ENCODE measurements at regions of chr16 and their contacts with region 1.

Region 1: DNA sequence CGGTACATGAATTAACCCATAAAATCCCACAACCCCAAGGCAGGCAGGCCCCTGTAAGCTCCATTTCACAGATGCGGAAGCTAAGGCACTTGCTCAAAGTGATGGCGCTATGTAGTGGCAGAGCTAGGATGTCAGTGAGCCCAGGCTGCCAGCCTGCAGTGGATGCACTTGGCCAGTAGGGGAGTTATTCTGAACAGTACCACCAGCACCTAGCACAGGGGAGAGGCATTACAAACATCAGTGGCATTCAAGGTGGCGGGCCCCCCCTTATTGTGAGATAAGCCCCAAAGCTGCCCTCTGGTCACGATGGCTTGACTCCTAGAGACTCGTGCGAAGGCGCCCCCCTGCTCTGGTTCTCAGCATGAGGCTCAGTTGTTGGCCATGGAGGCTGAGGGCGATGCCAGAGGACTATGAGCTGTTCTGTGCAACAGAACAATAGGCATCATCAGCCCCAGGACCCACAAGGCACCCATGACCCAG is 33.8 kb downstream of the GTF3C1 start:
- DNase-seq: peak; percentile 39 to 79
- H3K4me3 ChIP-seq: no peak overlapping the region
- H3K27ac ChIP-seq: no peak overlapping the region
- H3K4me1 ChIP-seq: no peaks in the 10 kb centered on the region
- H3K27me3 ChIP-seq: no peaks in the 10 kb centered on the region
- CTCF ChIP-seq: peak; percentile 67 to 95 (median 95)
- EP300 ChIP-seq: no peak
- POLR2A ChIP-seq: no peak; a peak in 1 of 3 replicates
- RAD21 ChIP-seq: peak; percentile 18 to 29; a peak in 2 of 4 replicates

Region 2: DNA sequence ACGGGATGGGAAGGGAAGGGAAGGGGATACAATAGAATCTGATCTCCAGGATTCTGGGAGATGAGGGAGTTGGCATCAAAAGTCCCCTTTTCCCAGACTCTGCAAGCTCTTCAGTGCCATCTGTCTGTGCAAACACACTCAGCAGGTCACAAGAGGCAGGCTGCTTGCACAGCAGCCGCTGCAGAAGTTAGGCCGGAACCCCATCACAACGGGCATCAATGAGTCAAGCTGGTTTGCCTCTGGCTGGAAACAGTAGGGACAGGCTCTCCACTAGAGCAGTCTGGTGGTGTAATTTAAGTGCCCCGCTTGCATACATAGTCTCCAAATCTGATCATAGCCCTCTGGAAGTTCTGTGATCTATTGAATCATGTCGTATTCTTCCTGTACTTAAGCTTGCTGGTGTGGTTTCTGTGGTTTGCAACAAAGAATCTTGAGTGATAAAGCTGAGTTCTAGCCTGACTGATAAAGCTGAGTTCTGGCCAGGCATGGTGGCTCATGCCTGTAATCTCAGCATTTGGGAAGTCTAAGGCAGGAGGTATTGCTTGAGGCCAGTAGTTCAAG is 346.3 kb before region 1 on chr16:
- CTCF ChIA-PET with region 1: no interaction called
- POLR2A ChIA-PET with region 1: no interaction called
- DNase-seq: no peak
- H3K4me3 ChIP-seq: no peak overlapping the region
- H3K27ac ChIP-seq: no peak overlapping the region
- H3K4me1 ChIP-seq: no peaks in the 10 kb centered on the region
- H3K27me3 ChIP-seq: no peaks in the 10 kb centered on the region; a peak in 1 of 7 replicates
- CTCF ChIP-seq: peak; percentile 21 to 34 (median 28); a peak in 3 of 4 replicates
- EP300 ChIP-seq: no peak
- POLR2A ChIP-seq: no peak
- RAD21 ChIP-seq: peak; percentile 21 to 36; a peak in 3 of 4 replicates

Region 3: DNA sequence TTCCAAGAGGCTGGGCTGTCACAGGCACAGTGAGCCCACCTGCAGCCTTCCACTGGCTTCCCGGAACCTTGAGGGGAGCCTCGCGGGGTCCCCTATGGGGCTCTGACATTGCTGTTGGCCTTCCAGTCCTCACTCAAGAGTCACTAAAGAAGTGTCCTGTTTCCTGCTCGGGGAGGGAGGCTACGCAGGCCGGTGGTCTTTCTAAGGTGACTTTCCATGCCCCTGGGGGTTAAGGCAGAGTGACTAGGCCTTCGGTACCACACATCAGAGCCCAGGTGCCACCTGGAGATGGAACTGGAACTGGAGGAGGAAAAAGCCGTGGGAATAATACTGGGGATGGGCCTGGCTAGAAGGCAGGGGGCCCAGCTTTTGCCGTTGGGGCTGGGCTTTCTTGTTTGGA is 41.9 kb before region 1 on chr16:
- CTCF ChIA-PET with region 1: no interaction called
- POLR2A ChIA-PET with region 1: no interaction called
- DNase-seq: no peak
- H3K4me3 ChIP-seq: no peak overlapping the region
- H3K27ac ChIP-seq: no peak overlapping the region
- H3K4me1 ChIP-seq: no peaks in the 10 kb centered on the region
- H3K27me3 ChIP-seq: no peaks in the 10 kb centered on the region
- CTCF ChIP-seq: no peak
- EP300 ChIP-seq: no peak
- POLR2A ChIP-seq: no peak
- RAD21 ChIP-seq: no peak

Region 4: GRCh38 chr16:27499659-27500055 is 16.3 kb before region 1 on chr16:
- CTCF ChIA-PET with region 1: interaction called, 26 read pairs
- POLR2A ChIA-PET with region 1: no interaction called
- DNase-seq: no peak
- H3K4me3 ChIP-seq: no peak overlapping the region
- H3K27ac ChIP-seq: no peak overlapping the region
- H3K4me1 ChIP-seq: no peaks in the 10 kb centered on the region
- H3K27me3 ChIP-seq: no peaks in the 10 kb centered on the region
- CTCF ChIP-seq: no peak
- EP300 ChIP-seq: no peak
- POLR2A ChIP-seq: no peak
- RAD21 ChIP-seq: no peak

Region 5: DNA sequence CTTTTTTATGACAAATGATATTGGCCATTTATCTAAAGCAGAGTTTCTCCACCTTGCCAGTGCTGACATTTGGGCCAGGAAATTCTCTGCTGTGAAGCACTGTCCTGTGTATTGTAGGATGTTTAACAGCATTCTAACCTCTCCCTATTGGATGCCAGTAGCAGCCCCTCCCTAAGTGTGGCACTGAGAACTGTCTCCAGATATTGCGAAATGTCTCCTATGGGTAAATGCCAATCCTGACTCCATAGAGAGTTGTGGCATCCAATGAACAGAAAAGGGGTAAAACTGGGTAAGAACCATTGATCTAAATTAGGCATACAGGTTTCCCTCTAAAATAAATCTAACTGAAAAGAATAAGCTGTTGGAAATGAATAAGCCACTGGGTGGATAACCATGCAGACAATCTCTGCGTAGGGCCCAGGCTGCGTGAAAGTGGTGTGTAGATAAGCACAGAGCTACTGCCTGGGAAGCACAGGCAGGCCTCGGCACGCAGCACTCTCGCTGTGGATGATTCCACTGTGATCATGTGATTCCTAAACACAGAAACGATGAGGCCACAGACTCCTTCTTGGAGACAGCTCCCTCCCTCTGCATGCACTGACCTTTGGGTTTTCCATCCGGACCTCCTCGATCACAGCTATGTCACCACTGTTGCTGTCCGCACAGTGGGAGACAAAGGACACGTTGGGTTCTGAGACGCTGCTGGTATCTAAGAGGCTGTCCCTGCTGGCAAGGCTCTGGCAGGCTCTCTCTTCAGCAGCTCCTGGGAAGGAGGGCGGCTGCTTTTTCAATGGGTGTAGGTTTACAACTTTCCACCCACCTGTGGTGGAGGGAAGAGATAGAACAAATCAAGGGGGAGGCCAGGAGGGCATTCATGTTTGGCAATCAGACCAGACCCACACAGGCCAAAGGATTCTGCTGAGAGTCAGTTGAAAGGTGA is 10.3 kb before region 1 on chr16:
- CTCF ChIA-PET with region 1: interaction called, 26 read pairs
- POLR2A ChIA-PET with region 1: interaction called, 4 read pairs
- DNase-seq: no peak
- H3K4me3 ChIP-seq: no peak overlapping the region
- H3K27ac ChIP-seq: no peak overlapping the region
- H3K4me1 ChIP-seq: no peaks in the 10 kb centered on the region
- H3K27me3 ChIP-seq: no peaks in the 10 kb centered on the region
- CTCF ChIP-seq: no peak
- EP300 ChIP-seq: no peak
- POLR2A ChIP-seq: no peak
- RAD21 ChIP-seq: no peak

Region 6: GRCh38 chr16:27529962-27530361 is 14.0 kb after region 1 on chr16:
- CTCF ChIA-PET with region 1: interaction called, 27 read pairs
- POLR2A ChIA-PET with region 1: no interaction called
- DNase-seq: no peak
- H3K4me3 ChIP-seq: no peak overlapping the region
- H3K27ac ChIP-seq: no peak overlapping the region
- H3K4me1 ChIP-seq: no peaks in the 10 kb centered on the region
- H3K27me3 ChIP-seq: no peaks in the 10 kb centered on the region
- CTCF ChIP-seq: no peak
- EP300 ChIP-seq: no peak
- POLR2A ChIP-seq: no peak
- RAD21 ChIP-seq: no peak

Region 7: GRCh38 chr16:27549859-27550581 is 34.1 kb after region 1 on chr16 and contains the starts of genes GTF3C1 and KATNIP:
- CTCF ChIA-PET with region 1: interaction called, 18 read pairs
- POLR2A ChIA-PET with region 1: interaction called, 6 read pairs
- DNase-seq: peak; percentile 97 to 100
- H3K4me3 ChIP-seq: peak within 1 kb of the TSS; percentile 90 to 100 (median 100)
- H3K27ac ChIP-seq: peak within 1 kb of the TSS; percentile 81
- H3K4me1 ChIP-seq: peaks cover 0 to 5% (median 3%) of the 10 kb centered on the region in 4 experiments; a peak in 3 of 7 replicates
- H3K27me3 ChIP-seq: no peaks in the 10 kb centered on the region
- CTCF ChIP-seq: no peak
- EP300 ChIP-seq: no peak
- POLR2A ChIP-seq: peak; percentile 77 to 80
- RAD21 ChIP-seq: no peak
- total RNA-seq, gene GTF3C1: 125 and 126 TPM in 2 replicates
- total RNA-seq, gene KATNIP: 17.0 and 20.0 TPM in 2 replicates

Region 8: DNA sequence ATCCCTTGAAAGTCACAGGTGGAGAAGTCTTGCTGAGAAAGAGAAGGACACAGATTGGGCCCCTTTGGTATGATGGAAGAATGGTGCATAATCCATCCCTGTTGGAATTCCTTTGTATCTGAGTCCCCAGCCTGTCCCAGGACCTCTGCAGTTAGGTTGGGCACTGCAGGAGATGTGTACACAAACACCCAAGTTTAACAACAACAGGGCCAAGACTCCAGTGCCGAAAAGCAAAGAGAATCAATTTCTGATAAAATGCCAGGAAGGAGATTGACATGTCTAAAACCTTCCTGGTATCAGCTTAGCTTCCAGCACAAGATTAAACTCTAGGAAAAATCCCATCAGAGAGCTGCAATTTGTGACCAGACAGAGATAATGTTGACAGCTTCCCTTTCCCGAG is 67.0 kb after region 1 on chr16:
- CTCF ChIA-PET with region 1: no interaction called
- POLR2A ChIA-PET with region 1: no interaction called
- DNase-seq: no peak
- H3K4me3 ChIP-seq: no peak overlapping the region
- H3K27ac ChIP-seq: no peak overlapping the region
- H3K4me1 ChIP-seq: 0 out of 7 replicates have a peak, but pooled peaks cover 0 to 2% (median 0%) of the 10 kb centered on the region in 4 experiments
- H3K27me3 ChIP-seq: no peaks in the 10 kb centered on the region
- CTCF ChIP-seq: no peak
- EP300 ChIP-seq: no peak
- POLR2A ChIP-seq: no peak
- RAD21 ChIP-seq: no peak